Dendritic cell treated with granulocyte-macrophage colony-stimulating factor and Interleukin-4, amounts not matched to agents 40 ng/mL and 50 ng/mL, for 4 days (primary cell): ENCODE measurements at regions of chr1 and their contacts with region 1.

Region 1: GRCh38 chr1:160907976-160908375 is 23.0 kb upstream of the ITLN1 start:
- H3K4me3 Mint-ChIP-seq: no peak overlapping the region
- H3K27ac Mint-ChIP-seq: no peak overlapping the region
- H3K4me1 Mint-ChIP-seq: no peaks in the 10 kb centered on the region
- H3K27me3 Mint-ChIP-seq: no peaks in the 10 kb centered on the region

Region 2: GRCh38 chr1:160971618-160972056 is 63.7 kb after region 1 on chr1:
- intact Hi-C with region 1: loop called (anchors 10 kb)
- H3K4me3 Mint-ChIP-seq: no peak overlapping the region
- H3K27ac Mint-ChIP-seq: no peak overlapping the region
- H3K4me1 Mint-ChIP-seq: no peaks in the 10 kb centered on the region
- H3K27me3 Mint-ChIP-seq: peaks cover 12% of the 10 kb centered on the region